Caco-2 (cell line): ENCODE measurements at regions of chr1 and their contacts with region 1.

Region 1: GRCh38 chr1:202184750-202185460 is 8.7 kb upstream of the LGR6 start:
- DNase-seq: peak; percentile 87 to 89
- H3K4me3 ChIP-seq: no peak overlapping the region
- H3K4me3 Mint-ChIP-seq: no peak overlapping the region
- H3K27ac Mint-ChIP-seq: no peak overlapping the region
- H3K4me1 ChIP-seq: peaks cover 9% of the 10 kb centered on the region
- H3K4me1 Mint-ChIP-seq: peaks cover 15% of the 10 kb centered on the region
- H3K27me3 ChIP-seq: no peaks in the 10 kb centered on the region
- H3K27me3 Mint-ChIP-seq: peaks cover 2% of the 10 kb centered on the region
- CTCF ChIP-seq: peak; percentile 88 to 92

Region 2: DNA sequence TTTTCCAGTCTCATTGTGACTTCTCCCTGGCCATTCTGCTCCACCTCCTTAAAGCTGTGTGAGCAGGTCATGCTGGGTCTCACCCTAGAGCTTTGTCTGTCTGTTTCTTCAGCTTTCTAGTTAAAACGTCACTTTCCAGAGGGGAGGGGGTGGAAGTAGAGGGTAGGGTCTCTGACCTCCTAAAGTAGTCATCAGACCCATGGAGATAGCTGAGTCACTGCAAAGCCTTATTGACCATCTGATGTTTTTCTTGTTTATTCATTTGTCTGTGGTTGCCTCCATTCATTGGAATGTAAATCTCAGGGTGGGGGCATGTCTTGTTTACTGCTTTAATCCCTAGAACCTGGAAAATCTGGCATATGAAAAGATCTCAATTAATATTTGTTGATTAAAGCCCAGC is 121.8 kb before region 1 on chr1:
- CTCF ChIA-PET with region 1: no interaction called
- POLR2A ChIA-PET with region 1: no interaction called
- intact Hi-C with region 1: no loop called
- DNase-seq: peak in 1 of 2 experiments; percentile 28
- H3K4me3 ChIP-seq: no peak overlapping the region
- H3K4me3 Mint-ChIP-seq: no peak overlapping the region
- H3K27ac Mint-ChIP-seq: peak overlapping the region; percentile 35
- H3K4me1 ChIP-seq: peaks cover 25% of the 10 kb centered on the region
- H3K4me1 Mint-ChIP-seq: peaks cover 23% of the 10 kb centered on the region
- H3K27me3 ChIP-seq: no peaks in the 10 kb centered on the region
- H3K27me3 Mint-ChIP-seq: no peaks in the 10 kb centered on the region
- CTCF ChIP-seq: no peak

Region 3: GRCh38 chr1:202235856-202236837 is 51.2 kb after region 1 on chr1:
- CTCF ChIA-PET with region 1: interaction called, 10 read pairs
- POLR2A ChIA-PET with region 1: no interaction called
- intact Hi-C with region 1: no loop called
- DNase-seq: peak; percentile 88 to 92
- H3K4me3 ChIP-seq: no peak overlapping the region
- H3K4me3 Mint-ChIP-seq: peak overlapping the region; percentile 55
- H3K27ac Mint-ChIP-seq: peak overlapping the region; percentile 78
- H3K4me1 ChIP-seq: peaks cover 28% of the 10 kb centered on the region
- H3K4me1 Mint-ChIP-seq: peaks cover 25% of the 10 kb centered on the region
- H3K27me3 ChIP-seq: no peaks in the 10 kb centered on the region
- H3K27me3 Mint-ChIP-seq: no peaks in the 10 kb centered on the region
- CTCF ChIP-seq: peak; percentile 89 to 94

Region 4: DNA sequence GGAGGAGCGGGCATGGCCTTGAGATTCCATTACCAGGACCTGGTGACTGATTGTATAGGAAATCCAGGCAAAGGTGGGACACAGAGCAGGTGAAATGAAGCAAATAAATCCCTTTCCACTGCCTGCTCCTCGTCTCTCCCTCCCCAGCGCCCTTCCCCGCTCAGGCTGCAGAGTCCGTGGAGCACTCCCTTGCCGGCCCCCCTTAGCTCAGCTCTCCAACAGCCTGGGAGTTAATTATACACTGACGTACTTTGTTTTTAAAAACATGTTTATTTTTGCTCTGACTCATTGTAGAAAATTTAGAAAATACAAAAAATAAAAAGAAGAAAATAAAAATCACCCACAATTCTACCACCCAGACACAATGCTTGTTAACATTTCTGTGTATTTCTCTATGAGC is 70.4 kb after region 1 on chr1:
- CTCF ChIA-PET with region 1: no interaction called
- POLR2A ChIA-PET with region 1: no interaction called
- intact Hi-C with region 1: loop called (anchors 5 kb)
- DNase-seq: no peak
- H3K4me3 ChIP-seq: no peak overlapping the region
- H3K4me3 Mint-ChIP-seq: no peak overlapping the region
- H3K27ac Mint-ChIP-seq: no peak overlapping the region
- H3K4me1 ChIP-seq: no peaks in the 10 kb centered on the region
- H3K4me1 Mint-ChIP-seq: no peaks in the 10 kb centered on the region
- H3K27me3 ChIP-seq: no peaks in the 10 kb centered on the region
- H3K27me3 Mint-ChIP-seq: peaks cover 4% of the 10 kb centered on the region
- CTCF ChIP-seq: no peak

Region 5: DNA sequence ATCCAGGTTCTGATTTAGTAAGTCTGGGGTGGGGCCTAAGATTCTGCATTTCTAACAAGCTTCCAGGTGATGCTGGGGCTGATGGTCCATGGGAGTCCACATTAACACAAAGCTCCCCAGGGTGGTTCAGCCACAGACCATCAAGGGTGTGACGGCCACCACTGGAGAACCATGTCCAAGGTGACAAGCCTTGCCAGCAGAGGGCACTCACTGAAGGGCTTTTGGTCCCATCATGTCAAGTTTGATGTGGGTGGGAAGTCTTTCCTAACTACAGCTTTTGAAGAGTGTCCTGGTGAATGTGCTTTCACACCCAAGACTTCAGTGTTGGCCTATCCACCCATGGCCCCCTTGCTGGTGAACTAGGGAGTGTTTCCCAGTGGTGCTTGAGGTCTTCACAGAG is 89.7 kb after region 1 on chr1:
- CTCF ChIA-PET with region 1: interaction called, 11 read pairs
- POLR2A ChIA-PET with region 1: no interaction called
- intact Hi-C with region 1: no loop called
- DNase-seq: peak in 1 of 2 experiments; percentile 42
- H3K4me3 ChIP-seq: no peak overlapping the region
- H3K4me3 Mint-ChIP-seq: no peak overlapping the region
- H3K27ac Mint-ChIP-seq: no peak overlapping the region
- H3K4me1 ChIP-seq: no peaks in the 10 kb centered on the region
- H3K4me1 Mint-ChIP-seq: no peaks in the 10 kb centered on the region
- H3K27me3 ChIP-seq: no peaks in the 10 kb centered on the region
- H3K27me3 Mint-ChIP-seq: peaks cover 15% of the 10 kb centered on the region
- CTCF ChIP-seq: peak in 1 of 2 experiments; percentile 63

Region 6: GRCh38 chr1:202376247-202376646 is 191.3 kb after region 1 on chr1:
- CTCF ChIA-PET with region 1: no interaction called
- POLR2A ChIA-PET with region 1: no interaction called
- intact Hi-C with region 1: no loop called
- DNase-seq: no peak
- H3K4me3 ChIP-seq: no peak overlapping the region
- H3K4me3 Mint-ChIP-seq: no peak overlapping the region
- H3K27ac Mint-ChIP-seq: no peak overlapping the region
- H3K4me1 ChIP-seq: peaks cover 15% of the 10 kb centered on the region
- H3K4me1 Mint-ChIP-seq: peaks cover 31% of the 10 kb centered on the region
- H3K27me3 ChIP-seq: no peaks in the 10 kb centered on the region
- H3K27me3 Mint-ChIP-seq: no peaks in the 10 kb centered on the region
- CTCF ChIP-seq: no peak

Region 7: DNA sequence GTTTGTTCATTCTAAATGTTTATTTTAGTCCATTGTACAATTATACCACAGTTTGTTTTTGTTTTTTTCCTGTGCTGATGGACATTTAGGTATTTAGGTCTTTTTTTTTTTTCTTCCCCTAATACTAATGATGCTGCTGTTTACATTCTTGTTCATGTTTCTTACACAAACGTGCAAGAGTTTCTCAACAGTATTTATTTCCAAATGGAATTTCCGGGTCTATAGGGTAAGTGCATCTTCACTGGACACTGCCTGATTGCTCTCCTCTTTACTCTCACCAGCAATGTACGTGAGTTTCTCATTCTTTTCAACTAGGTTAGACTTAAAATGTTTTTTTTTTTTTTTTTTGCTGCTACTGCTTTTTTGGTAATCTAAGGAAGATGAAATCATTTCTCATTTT is 286.3 kb after region 1 on chr1:
- CTCF ChIA-PET with region 1: no interaction called
- POLR2A ChIA-PET with region 1: no interaction called
- intact Hi-C with region 1: no loop called
- DNase-seq: no peak
- H3K4me3 ChIP-seq: no peak overlapping the region
- H3K4me3 Mint-ChIP-seq: no peak overlapping the region
- H3K27ac Mint-ChIP-seq: no peak overlapping the region
- H3K4me1 ChIP-seq: no peaks in the 10 kb centered on the region
- H3K4me1 Mint-ChIP-seq: peaks cover 4% of the 10 kb centered on the region
- H3K27me3 ChIP-seq: no peaks in the 10 kb centered on the region
- H3K27me3 Mint-ChIP-seq: no peaks in the 10 kb centered on the region
- CTCF ChIP-seq: no peak